ENCODE measurements at regions of chr20 and their contacts with region 1.

Region 1: GRCh38 chr20:815914-816606 is 17.5 kb upstream of the FAM110A start:
- DNase-seq: peak; percentile 76
- H3K4me3 Mint-ChIP-seq: no peak overlapping the region
- H3K27ac Mint-ChIP-seq: no peak overlapping the region
- H3K4me1 Mint-ChIP-seq: no peaks in the 10 kb centered on the region
- H3K27me3 Mint-ChIP-seq: peaks cover 15% of the 10 kb centered on the region

Region 2: DNA sequence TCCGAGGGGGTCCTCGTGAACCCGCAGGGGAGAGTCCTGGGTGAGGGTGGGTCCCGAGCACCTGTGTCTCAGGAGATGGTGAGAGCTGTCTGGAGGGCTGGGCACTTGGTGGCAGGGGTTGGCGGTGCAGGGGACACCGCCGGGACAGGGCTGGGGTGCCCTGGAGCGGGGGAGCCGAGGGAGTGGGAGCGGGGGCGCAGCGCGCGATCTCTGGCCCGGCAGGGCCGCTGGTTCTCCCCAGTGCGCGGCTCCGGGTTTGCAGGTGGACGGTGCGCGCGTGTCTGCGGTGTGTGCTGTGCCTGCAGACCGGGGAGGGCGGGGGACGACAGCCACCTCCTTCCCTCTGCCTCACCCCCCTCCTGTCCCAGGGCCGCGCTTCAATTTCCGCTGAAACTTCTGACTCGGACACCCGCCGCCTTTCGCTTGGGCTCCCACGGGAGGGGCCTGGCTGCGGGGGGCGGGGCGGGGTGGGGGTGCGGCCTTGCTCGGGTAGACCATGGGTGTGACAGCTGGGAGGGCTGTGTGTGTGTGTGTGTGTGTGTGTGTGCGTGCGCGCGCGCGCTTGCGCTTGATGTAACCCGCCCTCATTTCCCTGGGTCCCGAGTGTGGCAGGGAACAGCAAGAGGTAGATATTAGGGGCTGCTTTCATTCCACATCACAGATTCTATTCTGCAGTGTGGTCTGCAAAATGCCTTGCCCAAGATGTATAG is 434.3 kb before region 1 on chr20:
- CTCF ChIA-PET with region 1: no interaction called
- POLR2A ChIA-PET with region 1: no interaction called
- intact Hi-C with region 1: no loop called
- DNase-seq: peak; percentile 89
- H3K4me3 Mint-ChIP-seq: peak overlapping the region; percentile 76
- H3K27ac Mint-ChIP-seq: peak overlapping the region; percentile 84
- H3K4me1 Mint-ChIP-seq: peaks cover 13% of the 10 kb centered on the region
- H3K27me3 Mint-ChIP-seq: no peaks in the 10 kb centered on the region

Region 3: GRCh38 chr20:910870-911770 is 95.1 kb after region 1 on chr20:
- CTCF ChIA-PET with region 1: interaction called, 6 read pairs
- POLR2A ChIA-PET with region 1: no interaction called
- intact Hi-C with region 1: loop called (anchors 5 kb)
- DNase-seq: no peak
- H3K4me3 Mint-ChIP-seq: no peak overlapping the region
- H3K27ac Mint-ChIP-seq: no peak overlapping the region
- H3K4me1 Mint-ChIP-seq: no peaks in the 10 kb centered on the region
- H3K27me3 Mint-ChIP-seq: no peaks in the 10 kb centered on the region

Region 4: DNA sequence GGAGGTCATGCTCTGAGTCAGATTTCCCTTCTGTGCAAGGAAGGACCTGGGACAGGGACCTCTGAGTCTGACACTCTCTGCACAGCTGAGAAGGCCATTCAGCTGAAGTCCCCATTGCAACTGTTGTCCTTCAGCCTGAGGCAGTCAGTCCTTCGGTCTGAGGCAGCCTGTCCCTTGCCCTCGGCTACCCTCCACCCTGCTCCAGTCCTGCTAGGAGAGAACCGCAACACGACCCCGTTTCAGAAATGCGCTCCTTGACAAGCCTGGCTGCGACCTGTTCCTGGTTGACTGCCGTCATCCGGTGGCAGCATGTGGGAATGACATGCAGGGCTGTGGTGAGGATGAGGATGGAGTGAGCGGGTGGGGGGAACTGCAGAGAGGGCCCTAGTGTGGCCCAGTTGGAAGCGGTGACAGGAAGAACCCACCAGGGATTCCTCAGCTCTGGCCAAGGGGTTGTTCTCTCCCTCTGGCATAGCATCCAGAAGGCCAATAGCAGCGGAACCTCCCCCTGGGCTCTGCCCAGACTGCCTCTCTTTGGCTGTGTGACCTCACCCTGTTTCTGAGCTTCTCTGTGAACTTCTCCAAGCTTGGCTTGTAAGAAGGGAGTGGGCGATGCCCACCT is 140.4 kb after region 1 on chr20:
- CTCF ChIA-PET with region 1: interaction called, 324 read pairs
- POLR2A ChIA-PET with region 1: no interaction called
- intact Hi-C with region 1: loop called (anchors 1 kb)
- DNase-seq: peak; percentile 80
- H3K4me3 Mint-ChIP-seq: no peak overlapping the region
- H3K27ac Mint-ChIP-seq: no peak overlapping the region
- H3K4me1 Mint-ChIP-seq: peaks cover 2% of the 10 kb centered on the region
- H3K27me3 Mint-ChIP-seq: peaks cover 34% of the 10 kb centered on the region

Region 5: DNA sequence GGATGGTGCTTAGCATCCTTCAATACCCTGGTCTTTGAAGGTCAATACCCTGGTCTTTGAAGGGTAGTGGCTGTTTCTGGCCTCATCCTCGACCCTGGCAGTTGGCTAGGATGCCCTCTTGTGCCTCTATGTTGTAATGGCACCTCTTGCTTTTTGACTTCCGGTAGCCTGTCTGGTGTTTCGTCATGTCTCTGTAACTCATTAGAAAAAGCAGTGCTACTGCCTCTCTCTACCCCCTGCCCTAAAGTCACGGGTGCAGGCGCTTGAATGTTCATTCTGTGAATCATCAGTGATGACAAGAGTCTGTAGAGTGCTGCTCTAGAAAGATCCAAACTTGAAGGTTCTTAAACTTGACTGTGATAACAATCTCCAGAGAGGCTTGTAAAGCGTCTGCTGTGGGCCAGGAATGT is 157.7 kb after region 1 on chr20:
- CTCF ChIA-PET with region 1: interaction called, 9 read pairs
- POLR2A ChIA-PET with region 1: no interaction called
- intact Hi-C with region 1: loop called (anchors 1 kb)
- DNase-seq: peak; percentile 54
- H3K4me3 Mint-ChIP-seq: no peak overlapping the region
- H3K27ac Mint-ChIP-seq: no peak overlapping the region
- H3K4me1 Mint-ChIP-seq: peaks cover 2% of the 10 kb centered on the region
- H3K27me3 Mint-ChIP-seq: no peaks in the 10 kb centered on the region

Region 6: GRCh38 chr20:1212607-1213396 is 396.7 kb after region 1 on chr20:
- CTCF ChIA-PET with region 1: interaction called, 19 read pairs
- POLR2A ChIA-PET with region 1: no interaction called
- intact Hi-C with region 1: loop called (anchors 1 kb)
- DNase-seq: peak; percentile 84
- H3K4me3 Mint-ChIP-seq: no peak overlapping the region
- H3K27ac Mint-ChIP-seq: no peak overlapping the region
- H3K4me1 Mint-ChIP-seq: peaks cover 33% of the 10 kb centered on the region
- H3K27me3 Mint-ChIP-seq: no peaks in the 10 kb centered on the region